GM23248 (cell line): ENCODE measurements at regions of chr1 and their contacts with region 1.

Region 1: GRCh38 chr1:224127925-224128819 is 14.3 kb downstream of the FBXO28 start:
- DNase-seq: peak; percentile 67
- H3K4me3 ChIP-seq: no peak overlapping the region
- H3K27ac ChIP-seq: peak overlapping the region; percentile 29; the same call in 1 of the 2 replicates
- H3K4me1 ChIP-seq: peaks cover 17% of the 10 kb centered on the region
- H3K27me3 ChIP-seq: no peaks in the 10 kb centered on the region

Region 2: GRCh38 chr1:224266105-224266935 is 138.1 kb after region 1 on chr1:
- in situ Hi-C with region 1: no loop called
- DNase-seq: no peak
- H3K4me3 ChIP-seq: no peak overlapping the region
- H3K27ac ChIP-seq: no peak overlapping the region
- H3K4me1 ChIP-seq: no peaks in the 10 kb centered on the region
- H3K27me3 ChIP-seq: no peaks in the 10 kb centered on the region

Region 3: GRCh38 chr1:224329842-224330753 is 201.9 kb after region 1 on chr1 and contains the start of gene NVL:
- in situ Hi-C with region 1: loop called (anchors 10 kb)
- DNase-seq: peak; percentile 96
- H3K4me3 ChIP-seq: peak within 1 kb of the TSS; percentile 99
- H3K27ac ChIP-seq: peak within 1 kb of the TSS; percentile 88
- H3K4me1 ChIP-seq: peaks cover 11% of the 10 kb centered on the region; the same call in 1 of the 2 replicates
- H3K27me3 ChIP-seq: no peaks in the 10 kb centered on the region
- total RNA-seq, gene NVL: 25.8 and 28.3 TPM in 2 replicates

Region 4: GRCh38 chr1:224528900-224529299 is 400.7 kb after region 1 on chr1:
- in situ Hi-C with region 1: no loop called
- DNase-seq: peak; percentile 51
- H3K4me3 ChIP-seq: no peak overlapping the region
- H3K27ac ChIP-seq: no peak overlapping the region
- H3K4me1 ChIP-seq: peaks cover 27% of the 10 kb centered on the region
- H3K27me3 ChIP-seq: no peaks in the 10 kb centered on the region